ENCODE measurements at regions of chr22 and their contacts with region 1.

Region 1: GRCh38 chr22:39832627-39833074 is 60.9 kb downstream of the ENTHD1 start:
- DNase-seq: no peak
- ATAC-seq: no peak
- H3K4me3 ChIP-seq: no peak overlapping the region
- H3K27ac ChIP-seq: no peak overlapping the region
- H3K4me1 ChIP-seq: no peaks in the 10 kb centered on the region
- H3K27me3 ChIP-seq: peaks cover 77% of the 10 kb centered on the region
- CTCF ChIP-seq: no peak
- POLR2A ChIP-seq: no peak
- RAD21 ChIP-seq: no peak

Region 2: GRCh38 chr22:39773976-39774539 is 58.6 kb before region 1 on chr22:
- CTCF ChIA-PET with region 1: no interaction called
- POLR2A ChIA-PET with region 1: no interaction called
- RAD21 ChIA-PET with region 1: no interaction called
- intact Hi-C with region 1: no loop called
- DNase-seq: no peak
- ATAC-seq: no peak
- H3K4me3 ChIP-seq: no peak overlapping the region
- H3K27ac ChIP-seq: no peak overlapping the region
- H3K4me1 ChIP-seq: no peaks in the 10 kb centered on the region
- H3K27me3 ChIP-seq: peaks cover 90% of the 10 kb centered on the region
- CTCF ChIP-seq: no peak
- POLR2A ChIP-seq: no peak
- RAD21 ChIP-seq: no peak

Region 3: GRCh38 chr22:39845529-39845928 is 12.9 kb after region 1 on chr22:
- CTCF ChIA-PET with region 1: no interaction called
- POLR2A ChIA-PET with region 1: no interaction called
- RAD21 ChIA-PET with region 1: no interaction called
- intact Hi-C with region 1: no loop called
- DNase-seq: no peak
- ATAC-seq: no peak
- H3K4me3 ChIP-seq: no peak overlapping the region
- H3K27ac ChIP-seq: no peak overlapping the region
- H3K4me1 ChIP-seq: peaks cover 0 to 5% of the 10 kb centered on the region in 2 experiments; a peak in 1 of 4 replicates
- H3K27me3 ChIP-seq: peaks cover 32% of the 10 kb centered on the region
- CTCF ChIP-seq: no peak
- POLR2A ChIP-seq: no peak
- RAD21 ChIP-seq: no peak

Region 4: DNA sequence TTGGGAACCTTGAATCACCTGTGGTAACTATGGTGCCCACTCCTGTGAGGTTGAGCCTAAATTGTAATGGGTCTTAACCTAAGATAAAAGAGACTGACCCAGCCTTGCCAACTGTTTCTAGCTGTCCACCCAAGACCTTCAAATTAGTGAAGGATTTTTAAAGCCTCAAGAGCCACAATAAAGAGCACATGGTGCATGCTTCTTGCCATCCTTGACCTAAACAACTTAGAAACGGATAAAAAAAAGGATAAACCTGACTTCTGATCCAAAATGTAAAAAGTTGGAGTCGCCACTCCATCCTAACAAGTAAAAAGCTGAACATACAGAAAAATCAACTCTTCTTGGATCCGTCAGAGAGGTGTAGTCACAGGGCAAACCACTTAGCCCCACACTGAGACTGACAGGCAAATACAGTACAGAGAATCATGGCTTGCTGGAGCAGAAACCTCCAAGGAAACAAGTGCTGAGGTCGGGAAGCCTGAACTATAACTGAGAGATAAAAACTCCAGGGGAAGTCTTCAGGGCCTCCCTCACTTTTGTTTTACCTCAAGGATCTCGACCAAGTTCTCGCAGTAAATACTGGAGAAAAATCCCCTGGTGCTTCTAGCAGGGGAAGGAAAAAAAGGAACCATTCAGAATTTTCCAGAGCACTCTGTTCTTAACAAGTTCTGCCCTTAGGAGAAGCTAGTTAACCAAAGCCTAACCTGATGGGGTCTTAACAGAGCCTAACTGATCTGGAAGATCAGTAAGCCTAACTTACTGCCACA is 44.6 kb after region 1 on chr22:
- CTCF ChIA-PET with region 1: no interaction called
- POLR2A ChIA-PET with region 1: no interaction called
- RAD21 ChIA-PET with region 1: no interaction called
- intact Hi-C with region 1: loop called (anchors 5 kb)
- DNase-seq: no peak
- ATAC-seq: no peak
- H3K4me3 ChIP-seq: no peak overlapping the region
- H3K27ac ChIP-seq: no peak overlapping the region
- H3K4me1 ChIP-seq: no peaks in the 10 kb centered on the region
- H3K27me3 ChIP-seq: peaks cover 57% of the 10 kb centered on the region
- CTCF ChIP-seq: no peak
- POLR2A ChIP-seq: no peak
- RAD21 ChIP-seq: no peak

Measured in HCT116 (cell line).